Mammary epithelial cell (primary cell): ENCODE measurements at regions of chr12 and their contacts with region 1.

Region 1: DNA sequence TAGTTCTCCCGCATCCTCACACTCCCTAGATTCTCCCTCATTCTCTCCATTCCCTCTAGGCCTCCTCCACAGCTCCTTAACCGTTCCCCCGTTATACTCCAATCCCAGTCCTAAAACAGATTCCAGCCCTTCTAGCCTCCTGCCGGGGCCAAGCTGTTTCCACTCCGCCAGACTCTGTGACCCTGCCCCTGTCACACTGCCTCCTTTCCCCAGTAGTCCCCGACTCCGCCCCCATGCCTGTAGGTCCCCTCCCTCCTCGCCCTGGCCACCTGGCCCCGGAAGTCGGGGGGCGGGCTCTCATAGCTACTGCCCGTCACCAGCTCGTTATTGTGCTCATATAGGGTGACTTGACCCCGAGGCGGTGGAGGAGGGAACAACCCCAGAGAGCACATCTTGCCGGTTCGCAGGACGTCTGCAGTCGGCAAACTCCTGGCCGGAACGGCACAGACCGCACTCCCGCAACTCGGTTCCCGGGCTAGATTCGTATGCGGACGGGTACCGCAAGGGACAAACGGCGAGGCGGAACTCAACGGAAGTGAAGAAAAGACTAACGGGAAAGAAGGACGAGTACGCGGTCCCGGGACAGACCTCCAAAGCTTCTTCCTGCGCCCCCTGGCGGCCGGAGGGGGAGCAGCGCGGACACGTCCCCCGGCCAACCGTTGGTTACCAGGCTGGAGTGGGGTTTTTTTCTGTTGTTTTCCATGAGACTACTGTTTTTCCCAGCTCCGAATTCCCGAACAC is at the start of gene AAAS:
- DNase-seq: peak; percentile 92
- H3K4me3 ChIP-seq: peak within 1 kb of the TSS; percentile 74 to 86 (median 76)
- H3K27ac ChIP-seq: peak within 1 kb of the TSS; percentile 53
- H3K4me1 ChIP-seq: peaks cover 29% of the 10 kb centered on the region
- H3K27me3 ChIP-seq: no peaks in the 10 kb centered on the region
- CTCF ChIP-seq: peak; percentile 98 to 99
- total RNA-seq, gene AAAS: 29.2 to 45.4 TPM

Region 2: GRCh38 chr12:53159195-53159839 is 161.9 kb before region 1 on chr12:
- CTCF ChIA-PET with region 1: interaction called, 5 read pairs
- dilution Hi-C with region 1: no loop called
- in situ Hi-C with region 1: no loop called
- intact Hi-C with region 1: loop called (anchors 1 kb)
- DNase-seq: peak; percentile 63
- H3K4me3 ChIP-seq: no peak overlapping the region
- H3K27ac ChIP-seq: no peak overlapping the region
- H3K4me1 ChIP-seq: no peaks in the 10 kb centered on the region
- H3K27me3 ChIP-seq: no peaks in the 10 kb centered on the region
- CTCF ChIP-seq: peak; percentile 99

Region 3: GRCh38 chr12:53295070-53295890 is 26.0 kb before region 1 on chr12 and contains the start of gene PFDN5:
- CTCF ChIA-PET with region 1: interaction called, 11 read pairs
- dilution Hi-C with region 1: no loop called
- in situ Hi-C with region 1: no loop called
- intact Hi-C with region 1: loop called (anchors 1 kb)
- DNase-seq: peak; percentile 83
- H3K4me3 ChIP-seq: peak within 1 kb of the TSS; percentile 33 to 68 (median 58)
- H3K27ac ChIP-seq: peak within 1 kb of the TSS; percentile 58
- H3K4me1 ChIP-seq: peaks cover 25% of the 10 kb centered on the region
- H3K27me3 ChIP-seq: no peaks in the 10 kb centered on the region
- CTCF ChIP-seq: no peak
- total RNA-seq, gene PFDN5: 162 to 187 TPM

Region 4: GRCh38 chr12:53451661-53452158 is 130.5 kb after region 1 on chr12 and contains the start of gene PCBP2:
- CTCF ChIA-PET with region 1: no interaction called
- dilution Hi-C with region 1: no loop called
- in situ Hi-C with region 1: no loop called
- intact Hi-C with region 1: loop called (anchors 1 kb)
- DNase-seq: peak; percentile 99
- H3K4me3 ChIP-seq: peak within 1 kb of the TSS; percentile 68 to 99 (median 99)
- H3K27ac ChIP-seq: peak within 1 kb of the TSS; percentile 87
- H3K4me1 ChIP-seq: peaks cover 11% of the 10 kb centered on the region
- H3K27me3 ChIP-seq: no peaks in the 10 kb centered on the region
- CTCF ChIP-seq: peak; percentile 92 to 93
- total RNA-seq, gene PCBP2: 187 to 654 TPM

Region 5: DNA sequence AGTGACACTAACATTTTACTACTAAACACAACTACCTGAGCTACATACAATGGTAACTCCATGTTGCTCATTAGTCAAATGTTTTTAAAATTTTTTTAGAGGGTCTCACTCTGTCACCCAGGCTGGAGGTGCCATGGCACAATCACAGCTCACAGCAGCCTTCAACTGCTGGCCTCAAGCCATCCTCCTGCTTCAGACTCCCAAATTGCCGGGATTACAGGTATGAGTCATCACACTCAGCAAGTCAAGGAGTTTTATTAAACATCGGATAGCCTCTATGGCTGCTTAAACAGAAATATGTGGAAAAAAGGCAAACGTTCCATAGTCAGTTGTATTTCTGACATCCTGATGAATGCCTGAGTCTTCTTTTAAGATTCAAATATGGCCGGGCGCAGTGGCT is 197.1 kb after region 1 on chr12:
- CTCF ChIA-PET with region 1: no interaction called
- dilution Hi-C with region 1: no loop called
- in situ Hi-C with region 1: loop called in 1 of 2 experiments (anchors 5 kb)
- intact Hi-C with region 1: no loop called
- DNase-seq: no peak
- H3K4me3 ChIP-seq: no peak overlapping the region
- H3K27ac ChIP-seq: no peak overlapping the region
- H3K4me1 ChIP-seq: no peaks in the 10 kb centered on the region
- H3K27me3 ChIP-seq: no peaks in the 10 kb centered on the region
- CTCF ChIP-seq: no peak

Region 6: GRCh38 chr12:53746592-53747092 is 425.4 kb after region 1 on chr12:
- CTCF ChIA-PET with region 1: no interaction called
- dilution Hi-C with region 1: no loop called
- in situ Hi-C with region 1: no loop called
- intact Hi-C with region 1: loop called (anchors 2 kb)
- DNase-seq: peak; percentile 72
- H3K4me3 ChIP-seq: no peak overlapping the region
- H3K27ac ChIP-seq: no peak overlapping the region
- H3K4me1 ChIP-seq: peaks cover 6% of the 10 kb centered on the region
- H3K27me3 ChIP-seq: peaks cover 10% of the 10 kb centered on the region
- CTCF ChIP-seq: peak; percentile 99 to 100

Region 7: DNA sequence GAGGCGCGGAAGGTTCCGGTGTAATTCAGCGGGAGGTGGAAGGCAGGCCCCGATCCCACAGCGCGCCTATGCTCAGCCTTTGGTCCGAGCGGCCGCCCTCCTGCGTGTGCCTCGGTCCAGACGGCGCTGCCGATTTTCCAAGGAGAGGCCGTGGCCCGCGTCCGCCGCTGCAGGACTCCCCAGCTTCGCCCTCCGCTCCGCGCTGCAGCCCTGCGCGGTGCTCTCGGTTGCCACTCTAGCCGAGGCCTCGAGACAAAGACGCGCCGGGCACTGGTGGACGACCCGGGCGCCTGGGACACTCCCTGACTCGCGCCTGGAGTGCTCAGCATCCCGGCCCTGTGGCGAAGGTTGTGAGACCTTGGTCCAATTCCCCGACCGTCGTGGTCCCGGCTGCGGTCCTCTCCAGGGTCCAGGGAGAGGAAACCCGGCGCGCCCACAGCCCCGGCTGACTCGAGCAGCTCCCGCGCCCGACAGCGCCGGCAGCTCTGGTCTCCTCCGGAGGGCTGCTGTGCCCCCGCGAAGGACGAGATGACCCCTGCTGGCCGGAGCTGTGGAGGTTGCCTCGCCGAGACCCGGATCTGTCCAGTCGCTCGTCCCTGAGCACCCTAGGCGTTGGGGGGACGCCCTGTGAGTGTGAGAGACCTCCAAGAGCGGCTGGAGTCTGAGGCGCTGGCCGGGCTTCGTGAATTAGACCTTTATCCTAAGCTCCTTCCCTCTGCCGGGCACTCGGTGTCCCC is 639.9 kb after region 1 on chr12:
- CTCF ChIA-PET with region 1: no interaction called
- dilution Hi-C with region 1: no loop called
- in situ Hi-C with region 1: no loop called
- intact Hi-C with region 1: no loop called
- DNase-seq: no peak
- H3K4me3 ChIP-seq: peak overlapping the region in 1 of 3 experiments; percentile 24
- H3K27ac ChIP-seq: no peak overlapping the region
- H3K4me1 ChIP-seq: peaks cover 8% of the 10 kb centered on the region
- H3K27me3 ChIP-seq: peaks cover 8% of the 10 kb centered on the region
- CTCF ChIP-seq: no peak